Esophagus muscularis mucosa (tissue), 4 donors: ENCODE measurements at regions of chr16 and their contacts with region 1.

Region 1: DNA sequence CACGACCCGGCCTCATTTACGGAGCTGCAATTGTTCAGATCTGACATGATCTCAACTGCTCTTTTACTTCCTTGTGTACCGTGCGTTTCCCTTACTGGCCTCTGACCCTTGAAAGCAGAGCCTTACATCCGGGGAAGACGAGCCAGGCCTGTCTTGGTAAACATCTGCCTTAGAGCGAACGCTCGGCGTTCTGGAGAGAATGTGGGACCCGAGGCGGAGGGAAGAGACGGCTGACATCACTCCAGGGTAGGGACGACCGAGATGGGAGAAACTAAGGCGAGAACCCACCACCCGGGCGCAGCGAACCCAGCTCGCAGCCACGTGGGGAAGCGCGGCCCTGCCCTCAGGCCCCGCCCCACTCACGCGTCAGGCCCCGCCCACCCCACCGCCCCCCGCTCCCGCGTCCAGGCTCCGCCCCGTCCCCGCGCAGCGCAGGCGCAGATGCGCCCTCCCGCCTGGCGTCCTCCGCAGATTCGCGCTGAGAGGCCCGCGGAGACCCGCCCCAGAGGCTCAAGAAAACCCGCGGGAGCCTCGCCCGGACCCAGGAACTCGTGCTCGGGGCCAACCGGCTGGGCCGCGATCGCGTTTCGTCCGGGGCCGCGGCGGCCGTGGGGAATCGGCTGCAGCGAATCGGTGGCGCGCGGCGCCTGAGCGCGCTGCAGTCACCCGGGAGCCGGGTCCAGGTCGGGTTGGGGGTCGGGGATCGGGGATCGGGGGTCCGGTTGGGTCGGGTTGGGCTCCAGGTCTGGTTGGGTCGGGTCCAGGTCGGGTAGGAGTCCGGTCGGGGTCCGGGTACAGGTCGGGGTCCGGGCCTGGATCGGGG is at the start of gene TELO2:
- DNase-seq: peak; percentile 94
- H3K4me3 ChIP-seq: peak within 1 kb of the TSS; percentile 81 to 89 (median 84)
- H3K27ac ChIP-seq: peak within 1 kb of the TSS; percentile 84 to 92 (median 88)
- H3K4me1 ChIP-seq: peaks cover 24 to 34% (median 31%) of the 10 kb centered on the region in 4 donors
- H3K27me3 ChIP-seq: no peaks in the 10 kb centered on the region
- CTCF ChIP-seq: no peak
- EP300 ChIP-seq: no peak
- POLR2A ChIP-seq: no peak
- total RNA-seq, gene TELO2: 14.1 to 27.7 (median 18.4) TPM

Region 2: GRCh38 chr16:1553946-1554825 is 61.1 kb after region 1 on chr16:
- intact Hi-C with region 1: no loop called
- DNase-seq: no peak
- H3K4me3 ChIP-seq: no peak overlapping the region
- H3K27ac ChIP-seq: peak overlapping the region in 2 of 4 donors; percentile 21 to 46
- H3K4me1 ChIP-seq: peaks cover 29 to 50% (median 48%) of the 10 kb centered on the region in 4 donors
- H3K27me3 ChIP-seq: no peaks in the 10 kb centered on the region
- CTCF ChIP-seq: no peak
- EP300 ChIP-seq: no peak
- POLR2A ChIP-seq: no peak

Region 3: GRCh38 chr16:1565083-1565805 is 72.1 kb after region 1 on chr16:
- intact Hi-C with region 1: loop called (anchors 5 kb)
- DNase-seq: no peak
- H3K4me3 ChIP-seq: no peak overlapping the region
- H3K27ac ChIP-seq: peak overlapping the region in 2 of 4 donors; percentile 41 to 44
- H3K4me1 ChIP-seq: peaks cover 0 to 8% (median 0%) of the 10 kb centered on the region in 4 donors
- H3K27me3 ChIP-seq: no peaks in the 10 kb centered on the region
- CTCF ChIP-seq: no peak
- EP300 ChIP-seq: no peak
- POLR2A ChIP-seq: no peak

Region 4: GRCh38 chr16:1610276-1611017 is 117.3 kb after region 1 on chr16:
- intact Hi-C with region 1: loop called (anchors 5 kb)
- DNase-seq: peak; percentile 96
- H3K4me3 ChIP-seq: peak overlapping the region; percentile 88 to 98 (median 94)
- H3K27ac ChIP-seq: peak overlapping the region; percentile 79 to 94 (median 86)
- H3K4me1 ChIP-seq: peaks cover 36 to 53% (median 46%) of the 10 kb centered on the region in 4 donors
- H3K27me3 ChIP-seq: no peaks in the 10 kb centered on the region
- CTCF ChIP-seq: no peak
- EP300 ChIP-seq: no peak
- POLR2A ChIP-seq: no peak